SK-N-SH (cell line): ENCODE measurements at regions of chr3 and their contacts with region 1.

Region 1: DNA sequence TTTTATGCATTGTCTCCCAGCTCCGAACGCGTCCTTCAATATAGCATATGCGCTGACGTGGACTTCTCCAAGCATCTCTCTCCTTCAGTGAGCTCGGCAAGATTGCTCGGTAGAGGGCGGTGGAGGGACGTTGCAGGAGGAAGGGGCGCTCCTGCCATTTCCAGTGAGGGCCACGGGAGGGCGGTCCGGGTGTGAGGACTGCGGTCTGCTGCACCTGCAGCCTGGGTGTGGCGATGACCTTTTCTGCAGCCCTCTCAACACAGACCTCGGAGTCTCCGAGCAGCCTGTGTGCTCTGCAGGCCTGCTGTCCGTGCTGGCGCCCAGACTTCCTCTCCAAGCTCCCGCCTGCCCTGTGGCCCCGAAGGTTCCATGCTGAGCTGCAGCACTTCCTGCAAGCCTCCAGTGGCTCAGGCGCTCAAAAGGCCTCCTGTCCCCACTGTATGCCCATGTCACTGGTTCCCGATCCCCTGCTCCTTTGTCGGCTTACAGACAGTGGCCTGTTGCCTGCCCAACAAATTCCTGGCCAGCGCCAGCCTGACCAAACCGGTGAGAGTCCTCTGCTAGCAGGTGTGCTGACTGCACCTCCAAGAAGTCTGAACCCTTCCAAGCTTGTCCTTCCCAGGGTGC is 8.9 kb upstream of the RTP3 start:
- DNase-seq: peak; percentile 95
- H3K4me3 ChIP-seq: peak overlapping the region in 1 of 2 experiments; percentile 51; a peak in 1 of 4 replicates
- H3K27ac ChIP-seq: no peak overlapping the region
- H3K4me1 ChIP-seq: peaks cover 0 to 3% of the 10 kb centered on the region in 2 experiments; a peak in 1 of 4 replicates
- H3K27me3 ChIP-seq: no peaks in the 10 kb centered on the region; the same call in 1 of the 2 replicates
- CTCF ChIP-seq: peak; percentile 93
- EP300 ChIP-seq: no peak
- RAD21 ChIP-seq: peak; percentile 99

Region 2: GRCh38 chr3:46469680-46470357 is 19.0 kb before region 1 on chr3:
- CTCF ChIA-PET with region 1: interaction called, 77 read pairs
- POLR2A ChIA-PET with region 1: no interaction called
- DNase-seq: no peak
- H3K4me3 ChIP-seq: no peak overlapping the region
- H3K27ac ChIP-seq: no peak overlapping the region
- H3K4me1 ChIP-seq: no peaks in the 10 kb centered on the region; a peak in 1 of 4 replicates
- H3K27me3 ChIP-seq: peaks cover 10% of the 10 kb centered on the region
- CTCF ChIP-seq: no peak
- EP300 ChIP-seq: no peak
- RAD21 ChIP-seq: no peak

Region 3: DNA sequence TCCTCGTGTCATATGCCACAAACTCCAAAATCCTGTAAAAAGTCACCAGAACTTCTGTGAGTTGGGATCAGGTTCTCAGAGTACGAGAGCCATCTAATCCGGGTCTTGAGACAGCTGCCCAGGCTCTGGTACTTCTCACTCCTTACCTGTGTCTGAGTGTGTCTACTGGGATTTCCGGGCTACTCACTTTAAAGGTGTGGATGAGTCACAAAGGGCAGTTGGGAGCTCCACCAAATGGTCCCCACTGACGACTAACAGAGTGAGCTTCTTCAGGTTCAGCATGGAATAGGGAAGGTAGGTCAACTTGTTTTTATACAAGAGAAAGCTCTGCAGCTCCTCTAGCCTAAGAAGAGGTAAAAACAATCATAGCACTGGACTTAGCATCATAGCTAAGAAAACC is 38.4 kb after region 1 on chr3:
- CTCF ChIA-PET with region 1: interaction called, 11 read pairs
- POLR2A ChIA-PET with region 1: no interaction called
- DNase-seq: no peak
- H3K4me3 ChIP-seq: no peak overlapping the region
- H3K27ac ChIP-seq: no peak overlapping the region
- H3K4me1 ChIP-seq: no peaks in the 10 kb centered on the region
- H3K27me3 ChIP-seq: no peaks in the 10 kb centered on the region
- CTCF ChIP-seq: no peak
- EP300 ChIP-seq: no peak
- RAD21 ChIP-seq: no peak

Region 4: DNA sequence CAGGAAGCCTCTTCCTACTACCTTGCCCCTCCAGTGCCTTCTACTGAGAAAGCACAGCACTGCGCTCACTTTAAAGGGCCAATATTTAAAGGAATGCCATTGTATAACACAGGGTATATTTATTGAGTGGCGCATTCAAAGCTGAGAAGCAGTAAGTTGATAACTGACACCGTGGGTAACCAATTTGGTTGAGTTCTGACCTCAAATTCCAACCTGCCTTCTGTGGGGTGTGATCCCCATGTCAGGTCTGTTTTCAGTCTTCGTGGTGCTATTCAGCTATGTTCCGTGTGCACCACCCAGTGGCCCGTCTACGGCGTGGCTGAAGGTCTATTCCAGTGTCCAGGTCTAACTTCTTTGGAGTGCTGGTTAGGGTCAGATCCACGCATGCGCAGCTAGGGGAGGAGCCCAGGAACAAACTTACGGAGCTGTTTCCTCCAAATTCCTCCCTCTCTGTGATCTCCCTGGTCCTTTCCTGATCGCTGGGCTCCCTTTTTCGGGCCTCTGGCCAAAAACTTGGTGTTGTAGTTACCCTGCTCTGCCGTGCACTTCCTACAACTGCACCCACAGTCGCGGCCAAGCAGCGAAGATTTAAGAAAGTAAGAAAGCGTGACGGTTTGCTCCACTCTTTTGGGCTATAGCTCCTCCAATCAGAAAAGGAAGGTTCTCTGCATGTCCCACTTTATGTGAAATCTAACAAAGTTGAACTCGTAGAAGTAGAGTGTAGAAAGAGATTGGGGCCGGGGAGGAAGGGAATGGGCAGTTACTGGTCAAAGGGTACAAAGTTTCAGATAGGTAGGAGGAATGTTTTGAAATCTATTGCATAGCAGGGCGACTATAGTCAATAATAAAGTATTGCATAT is 69.6 kb after region 1 on chr3:
- CTCF ChIA-PET with region 1: interaction called, 223 read pairs
- POLR2A ChIA-PET with region 1: no interaction called
- DNase-seq: peak; percentile 80
- H3K4me3 ChIP-seq: peak overlapping the region; percentile 51 to 55
- H3K27ac ChIP-seq: no peak overlapping the region
- H3K4me1 ChIP-seq: peaks cover 0 to 15% of the 10 kb centered on the region in 2 experiments; a peak in 2 of 4 replicates
- H3K27me3 ChIP-seq: no peaks in the 10 kb centered on the region
- CTCF ChIP-seq: peak; percentile 68
- EP300 ChIP-seq: no peak
- RAD21 ChIP-seq: peak; percentile 86

Region 5: GRCh38 chr3:46663591-46664135 is 174.8 kb after region 1 on chr3:
- CTCF ChIA-PET with region 1: interaction called, 54 read pairs
- POLR2A ChIA-PET with region 1: no interaction called
- DNase-seq: peak; percentile 59
- H3K4me3 ChIP-seq: no peak overlapping the region
- H3K27ac ChIP-seq: peak overlapping the region in 1 of 2 experiments; percentile 16; a peak in 1 of 4 replicates
- H3K4me1 ChIP-seq: peaks cover 0 to 72% of the 10 kb centered on the region in 2 experiments; a peak in 1 of 4 replicates
- H3K27me3 ChIP-seq: no peaks in the 10 kb centered on the region
- CTCF ChIP-seq: no peak
- EP300 ChIP-seq: no peak
- RAD21 ChIP-seq: peak; percentile 51

Region 6: GRCh38 chr3:46705022-46705530 is 216.2 kb after region 1 on chr3:
- CTCF ChIA-PET with region 1: interaction called, 44 read pairs
- POLR2A ChIA-PET with region 1: no interaction called
- DNase-seq: peak; percentile 81
- H3K4me3 ChIP-seq: no peak overlapping the region; a peak in 1 of 4 replicates
- H3K27ac ChIP-seq: no peak overlapping the region
- H3K4me1 ChIP-seq: peaks cover 0 to 32% of the 10 kb centered on the region in 2 experiments; a peak in 1 of 4 replicates
- H3K27me3 ChIP-seq: peaks cover 14% of the 10 kb centered on the region
- CTCF ChIP-seq: peak; percentile 94
- EP300 ChIP-seq: no peak
- RAD21 ChIP-seq: peak; percentile 97

Region 7: GRCh38 chr3:46909535-46910442 is 420.9 kb after region 1 on chr3:
- CTCF ChIA-PET with region 1: interaction called, 33 read pairs
- POLR2A ChIA-PET with region 1: no interaction called
- DNase-seq: peak; percentile 94
- H3K4me3 ChIP-seq: peak overlapping the region in 1 of 2 experiments; percentile 30; a peak in 1 of 4 replicates
- H3K27ac ChIP-seq: no peak overlapping the region
- H3K4me1 ChIP-seq: peaks cover 11 to 19% of the 10 kb centered on the region in 2 experiments
- H3K27me3 ChIP-seq: no peaks in the 10 kb centered on the region
- CTCF ChIP-seq: peak; percentile 86
- EP300 ChIP-seq: no peak
- RAD21 ChIP-seq: peak; percentile 97